Head of caudate nucleus (tissue), 42 donors: ENCODE measurements at regions of chr1 and their contacts with region 1.

Region 1: DNA sequence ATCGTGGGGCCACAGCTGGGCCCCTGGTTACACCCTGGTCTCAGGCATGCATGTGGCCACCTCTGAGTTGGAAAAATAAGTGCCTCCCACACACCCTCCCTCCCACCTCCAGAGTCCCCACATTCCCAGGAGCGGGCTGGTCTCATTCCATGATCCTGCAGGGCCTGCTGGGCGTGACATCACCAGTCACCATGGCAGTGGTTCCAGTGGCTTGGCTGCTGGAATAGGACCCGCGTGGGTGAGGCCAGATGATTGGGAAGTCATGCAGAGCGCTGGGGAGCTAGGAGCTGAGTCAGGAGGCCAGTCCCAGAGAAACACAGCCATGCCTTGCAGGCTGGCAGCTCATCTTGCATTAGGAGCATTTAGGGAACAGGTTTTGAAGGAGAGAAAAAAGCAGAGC is 125.4 kb upstream of the TMEM51 start:
- DNase-seq: peak; percentile 34 to 91 (median 70)

Region 2: DNA sequence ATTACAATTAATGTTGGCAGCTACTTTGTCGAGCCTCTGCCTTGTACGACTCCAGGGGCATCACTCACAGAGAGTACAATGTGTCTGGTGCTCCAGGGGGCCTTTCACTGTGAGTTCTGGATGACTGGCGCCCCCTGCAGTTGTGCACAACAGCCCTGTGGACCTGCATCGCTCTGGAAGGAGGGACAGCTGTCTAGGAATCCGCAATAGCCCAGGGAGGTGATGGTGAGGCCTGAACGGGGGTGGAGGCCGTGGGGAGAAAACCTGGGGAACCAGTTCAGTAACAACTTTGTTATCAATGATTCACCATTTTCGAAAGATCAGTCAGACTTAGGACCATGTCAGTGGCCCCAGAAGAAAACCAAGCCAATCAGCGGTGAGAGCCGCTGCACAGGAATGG is 240.5 kb before region 1 on chr1:
- intact Hi-C with region 1: loop called (anchors 5 kb)
- DNase-seq: peak in 1 of 42 donors; percentile 33

Region 3: GRCh38 chr1:14923727-14924452 is 104.2 kb before region 1 on chr1:
- intact Hi-C with region 1: loop called (anchors 5 kb)
- DNase-seq: peak in 40 of 42 donors; percentile 47 to 88 (median 70)

Region 4: DNA sequence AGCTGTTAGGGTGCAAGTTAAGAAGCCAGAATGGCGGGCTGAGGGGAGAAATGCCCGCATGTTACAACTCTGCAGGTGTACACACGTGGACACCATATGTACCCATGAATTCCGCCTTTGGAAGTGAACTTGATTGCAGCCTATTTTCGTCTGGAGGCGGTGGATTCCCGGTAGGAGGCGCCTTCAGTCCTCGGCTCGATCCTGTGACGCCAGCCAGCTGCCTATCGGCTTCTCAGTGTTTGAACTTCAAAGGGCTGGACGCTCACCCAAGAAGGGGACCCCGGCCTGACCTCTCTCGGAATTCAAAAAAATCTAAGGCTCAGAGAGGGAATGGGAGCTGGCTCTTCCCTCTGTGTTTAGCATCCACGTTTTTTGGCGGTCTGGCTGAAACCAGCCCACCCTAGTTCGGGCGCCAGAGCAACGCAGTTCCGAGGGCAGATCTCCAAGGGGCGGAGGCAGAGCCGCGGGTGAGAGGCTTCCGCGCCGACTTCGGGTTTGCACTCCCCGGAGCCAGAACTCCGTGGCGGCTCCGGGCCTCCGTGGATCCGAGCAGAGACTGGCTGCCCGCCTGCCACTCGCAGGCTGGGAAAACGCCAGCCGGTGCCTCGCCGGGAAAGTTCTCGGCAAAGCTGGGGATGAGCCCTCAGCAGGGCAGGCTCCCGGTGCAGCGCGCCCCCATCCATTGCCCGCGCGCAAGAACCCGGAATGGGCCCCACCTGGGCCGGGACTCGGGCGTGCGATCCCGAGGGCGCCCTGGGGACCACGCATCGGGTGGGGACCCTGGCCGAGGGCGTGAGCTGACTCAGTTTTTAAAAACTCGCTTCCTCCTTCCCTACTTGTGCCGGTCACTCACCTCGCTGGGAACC is 124.4 kb after region 1 on chr1:
- intact Hi-C with region 1: no loop called
- DNase-seq: peak; percentile 65 to 92 (median 82)